Left cardiac atrium (tissue), 4 donors: ENCODE measurements at regions of chr3 and their contacts with region 1.

Region 1: GRCh38 chr3:133608388-133608787 is 34.9 kb downstream of the CDV3 start:
- DNase-seq: no peak
- ATAC-seq: no peak

Region 2: DNA sequence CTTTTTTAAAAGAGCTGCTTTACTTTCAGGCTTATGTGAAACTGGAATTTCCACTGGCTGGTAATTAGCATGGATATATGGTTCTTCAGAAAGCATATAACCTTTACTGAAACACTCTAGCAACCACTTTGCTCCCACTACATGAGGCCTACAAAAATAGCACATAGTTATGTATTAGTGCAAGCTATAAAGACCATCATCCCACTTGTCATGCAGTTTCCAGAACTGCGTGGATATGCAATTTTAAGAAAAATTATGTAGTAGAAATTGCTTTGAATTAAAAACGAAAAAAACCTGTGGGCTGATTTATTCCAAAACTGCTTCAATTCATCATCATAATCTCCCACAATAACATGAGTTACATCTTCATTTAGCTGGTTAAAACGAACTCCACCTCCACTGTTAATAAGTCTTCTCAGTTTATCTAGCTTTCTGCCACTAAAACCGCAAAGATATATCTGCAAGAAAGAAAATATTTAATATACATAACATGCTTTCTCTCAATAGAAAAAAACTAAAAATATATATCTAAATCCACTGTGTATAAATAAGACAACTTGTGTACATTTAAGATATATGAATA is 41.2 kb after region 1 on chr3:
- intact Hi-C with region 1: loop called in 1 of 2 experiments (anchors 10 kb)
- DNase-seq: no peak
- ATAC-seq: no peak

Region 3: DNA sequence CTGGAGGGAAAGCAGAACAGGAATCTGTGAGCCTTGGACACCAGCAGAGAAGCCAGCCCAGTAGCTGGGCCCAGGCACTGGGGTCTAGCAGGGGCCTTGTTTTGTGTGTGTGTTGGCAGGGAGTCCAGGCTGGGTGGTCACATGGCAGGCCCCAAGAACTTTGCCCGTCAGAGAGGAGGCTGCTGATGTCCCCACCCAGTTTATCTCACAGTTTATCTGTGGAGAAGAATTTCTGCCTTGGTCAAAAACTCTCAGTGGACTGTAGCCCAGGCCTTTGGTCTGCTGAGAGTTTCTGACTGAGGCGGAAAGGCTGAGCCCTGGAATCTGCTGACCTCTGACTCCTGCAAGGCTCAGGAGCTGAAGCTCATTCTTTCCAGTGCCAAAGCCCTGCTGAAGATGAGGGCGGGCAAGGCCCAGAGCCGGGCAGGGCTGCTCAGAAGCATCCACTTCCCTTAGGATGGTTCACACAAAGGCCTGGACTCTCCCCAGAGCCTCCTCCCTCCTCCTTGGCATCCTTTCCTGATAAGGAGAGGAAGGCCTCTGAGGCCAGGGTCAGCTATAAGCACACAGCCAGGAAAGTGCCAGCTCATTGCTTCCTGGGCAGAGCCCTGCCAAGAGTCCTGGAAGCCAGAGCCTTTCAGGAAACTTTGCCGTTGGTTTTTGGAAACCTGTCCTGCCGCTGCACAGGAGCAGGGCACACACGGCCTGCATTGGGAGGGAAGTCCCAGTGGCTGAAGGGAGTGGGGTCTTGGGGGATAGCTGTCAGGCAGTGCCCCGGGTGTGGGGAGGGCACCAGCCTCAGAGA is 458.5 kb after region 1 on chr3:
- intact Hi-C with region 1: no loop called
- DNase-seq: peak; percentile 75
- ATAC-seq: peak; percentile 36 to 88

Region 4: GRCh38 chr3:134536781-134537180 is 928.4 kb after region 1 on chr3:
- intact Hi-C with region 1: no loop called
- DNase-seq: no peak
- ATAC-seq: peak; percentile 84 to 88